Posterior vena cava (tissue), 2 donors: ENCODE measurements at regions of chr1 and their contacts with region 1.

Region 1: DNA sequence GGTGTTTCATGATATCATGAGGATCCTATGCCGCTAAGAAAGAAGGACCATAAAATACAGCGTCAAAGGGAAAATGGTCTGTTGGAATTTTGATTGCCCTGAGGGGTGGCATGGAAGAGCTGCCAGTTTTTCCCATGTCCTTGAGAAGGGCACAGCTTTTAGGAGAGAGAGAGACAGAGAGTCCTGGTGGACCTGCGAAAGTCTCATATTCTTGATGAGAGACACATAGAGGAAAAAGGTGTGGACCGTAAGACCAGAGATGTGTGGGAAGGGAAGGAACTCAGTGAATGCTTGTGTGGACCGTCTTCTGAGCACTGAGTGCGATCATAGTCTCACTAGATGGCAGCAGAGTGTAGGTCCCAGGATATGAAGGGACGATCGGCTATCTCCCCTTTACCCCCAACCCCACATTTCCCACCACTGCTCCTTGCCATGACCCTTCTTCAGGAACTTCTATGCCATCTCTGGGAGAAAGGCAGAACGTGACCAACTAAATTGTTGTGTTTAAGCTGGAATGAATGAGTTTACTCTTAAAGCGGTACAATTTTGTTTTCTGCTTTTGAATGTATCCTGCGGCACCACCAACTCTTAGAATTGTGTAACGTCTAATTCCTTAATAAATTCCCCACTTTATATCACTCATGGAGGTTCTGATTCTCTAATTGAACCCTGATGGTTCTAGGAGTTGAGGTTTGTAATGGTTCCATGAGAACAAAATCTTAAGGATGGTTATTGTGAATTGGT is 117.7 kb downstream of the CTH start:
- DNase-seq: no peak

Region 2: DNA sequence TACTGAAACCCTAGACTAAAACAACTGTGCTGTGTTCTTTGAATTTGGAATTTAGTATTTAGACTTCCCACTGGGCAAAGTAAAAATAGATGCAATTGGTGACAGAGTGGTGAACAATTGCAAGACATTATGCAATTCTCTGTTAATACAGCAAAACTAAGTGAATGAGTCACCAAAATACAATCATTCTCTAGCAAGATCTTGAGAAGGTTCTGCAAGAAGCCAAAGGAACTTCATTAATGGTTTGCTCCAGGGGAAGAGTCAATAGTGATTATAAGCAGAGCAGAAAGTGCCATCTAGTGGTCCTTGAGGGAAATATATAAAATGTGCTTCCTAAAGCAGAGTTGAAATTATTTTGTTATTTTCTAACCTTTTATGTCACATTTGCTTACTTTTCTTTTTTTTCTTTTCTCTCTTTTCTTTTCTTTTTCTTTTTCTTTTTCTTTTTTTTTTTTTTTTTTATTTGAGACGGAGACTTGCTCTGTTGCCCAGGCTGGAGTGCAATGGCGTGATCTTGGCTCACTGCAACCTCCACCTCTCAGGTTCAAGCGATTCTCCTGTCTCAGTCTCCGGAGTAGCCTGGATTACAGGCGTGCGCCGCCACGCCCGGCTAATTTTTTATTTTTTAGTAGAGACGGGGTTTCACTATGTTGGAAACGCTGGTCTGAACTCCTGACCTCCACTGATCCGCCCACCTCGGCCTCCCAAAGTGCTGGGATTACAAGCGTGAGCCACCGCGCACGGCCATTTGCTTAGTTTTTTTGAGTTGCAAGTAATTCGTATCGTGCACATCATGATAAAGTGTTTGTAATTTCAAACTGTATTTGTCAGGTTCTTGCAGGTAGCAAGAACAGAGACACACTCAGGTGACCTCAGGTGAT is 18.5 kb before region 1 on chr1:
- intact Hi-C with region 1: no loop called
- DNase-seq: no peak

Region 3: GRCh38 chr1:71030026-71030425 is 501.3 kb after region 1 on chr1:
- intact Hi-C with region 1: no loop called
- DNase-seq: no peak

Region 4: DNA sequence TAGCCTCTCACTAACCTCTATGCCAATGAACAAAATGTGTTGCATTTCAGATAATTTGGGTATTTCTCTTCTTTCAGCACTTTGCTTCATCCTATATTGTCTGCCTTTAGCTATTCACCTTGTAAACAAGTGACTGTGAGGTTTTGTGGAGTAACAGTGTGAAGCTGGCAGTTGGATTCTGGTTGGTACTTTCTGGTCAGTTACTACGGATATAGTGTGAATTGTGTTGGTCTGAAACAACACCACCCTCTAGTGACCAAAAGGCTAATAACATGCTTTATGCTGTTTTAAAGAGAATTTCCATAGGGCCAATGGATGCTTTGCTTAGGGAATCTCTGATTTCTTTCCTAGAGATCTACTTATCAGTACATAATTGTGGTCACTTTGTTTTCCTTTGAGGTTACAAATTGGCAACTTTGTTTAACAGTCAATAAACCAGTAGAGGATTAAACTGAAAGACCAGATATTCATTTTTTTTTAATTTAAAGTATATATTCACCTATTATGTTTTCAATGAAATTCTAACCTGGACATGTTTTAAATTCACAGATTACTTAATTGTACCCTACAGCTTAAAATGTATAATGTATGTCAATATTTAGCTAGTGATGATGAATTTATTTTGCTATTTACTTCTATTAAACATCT is 521.3 kb after region 1 on chr1:
- intact Hi-C with region 1: loop called in 1 of 2 experiments (anchors 5 kb)
- DNase-seq: no peak